AG04450 (cell line): ENCODE measurements at regions of chr12 and their contacts with region 1.

Region 1: GRCh38 chr12:125183187-125184067 is 118.2 kb downstream of the AACS start:
- DNase-seq: peak; percentile 42
- H3K4me3 ChIP-seq: no peak overlapping the region
- H3K27ac ChIP-seq: no peak overlapping the region
- H3K27me3 ChIP-seq: peaks cover 32% of the 10 kb centered on the region
- CTCF ChIP-seq: peak; percentile 99

Region 2: DNA sequence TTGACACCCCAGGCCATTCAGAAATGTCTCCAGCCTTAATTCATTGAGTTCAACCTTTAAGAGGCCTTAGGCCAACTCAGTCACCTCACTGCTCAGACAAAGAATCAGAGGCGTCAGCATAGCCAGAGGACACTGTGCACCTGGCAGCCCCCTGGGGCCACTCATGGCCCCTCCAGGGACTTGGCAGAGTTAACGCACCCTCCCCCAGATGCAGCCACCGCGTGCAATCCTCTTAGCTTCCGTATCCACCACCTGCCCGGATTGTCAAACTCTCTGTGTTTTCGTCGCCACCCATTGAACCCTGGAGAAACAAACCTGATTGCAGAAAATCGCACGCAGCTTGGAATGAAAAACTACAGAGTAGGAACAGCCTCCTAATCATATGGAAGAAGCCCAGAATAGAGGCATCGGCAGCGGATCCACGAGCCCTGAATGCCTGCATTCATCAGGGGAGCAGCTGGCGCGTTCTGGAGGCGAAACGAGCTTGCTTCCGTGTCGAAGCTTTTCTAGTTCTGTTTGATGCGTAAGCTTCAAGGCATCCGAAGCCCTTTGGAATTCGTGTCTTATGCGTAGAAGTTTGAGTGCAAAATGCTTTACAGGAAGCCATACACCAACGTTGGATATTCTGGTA is 167.6 kb before region 1 on chr12:
- CTCF ChIA-PET with region 1: interaction called, 11 read pairs
- POLR2A ChIA-PET with region 1: no interaction called
- DNase-seq: no peak
- H3K4me3 ChIP-seq: no peak overlapping the region
- H3K27ac ChIP-seq: no peak overlapping the region
- H3K27me3 ChIP-seq: no peaks in the 10 kb centered on the region
- CTCF ChIP-seq: no peak

Region 3: GRCh38 chr12:125172231-125172850 is 11.1 kb before region 1 on chr12:
- CTCF ChIA-PET with region 1: interaction called, 13 read pairs
- POLR2A ChIA-PET with region 1: no interaction called
- DNase-seq: no peak
- H3K4me3 ChIP-seq: no peak overlapping the region
- H3K27ac ChIP-seq: no peak overlapping the region
- H3K27me3 ChIP-seq: peaks cover 2% of the 10 kb centered on the region
- CTCF ChIP-seq: no peak

Region 4: GRCh38 chr12:125203145-125203765 is 19.8 kb after region 1 on chr12:
- CTCF ChIA-PET with region 1: interaction called, 11 read pairs
- POLR2A ChIA-PET with region 1: no interaction called
- DNase-seq: no peak
- H3K4me3 ChIP-seq: no peak overlapping the region
- H3K27ac ChIP-seq: no peak overlapping the region
- H3K27me3 ChIP-seq: peaks cover 2% of the 10 kb centered on the region
- CTCF ChIP-seq: peak; percentile 61

Region 5: DNA sequence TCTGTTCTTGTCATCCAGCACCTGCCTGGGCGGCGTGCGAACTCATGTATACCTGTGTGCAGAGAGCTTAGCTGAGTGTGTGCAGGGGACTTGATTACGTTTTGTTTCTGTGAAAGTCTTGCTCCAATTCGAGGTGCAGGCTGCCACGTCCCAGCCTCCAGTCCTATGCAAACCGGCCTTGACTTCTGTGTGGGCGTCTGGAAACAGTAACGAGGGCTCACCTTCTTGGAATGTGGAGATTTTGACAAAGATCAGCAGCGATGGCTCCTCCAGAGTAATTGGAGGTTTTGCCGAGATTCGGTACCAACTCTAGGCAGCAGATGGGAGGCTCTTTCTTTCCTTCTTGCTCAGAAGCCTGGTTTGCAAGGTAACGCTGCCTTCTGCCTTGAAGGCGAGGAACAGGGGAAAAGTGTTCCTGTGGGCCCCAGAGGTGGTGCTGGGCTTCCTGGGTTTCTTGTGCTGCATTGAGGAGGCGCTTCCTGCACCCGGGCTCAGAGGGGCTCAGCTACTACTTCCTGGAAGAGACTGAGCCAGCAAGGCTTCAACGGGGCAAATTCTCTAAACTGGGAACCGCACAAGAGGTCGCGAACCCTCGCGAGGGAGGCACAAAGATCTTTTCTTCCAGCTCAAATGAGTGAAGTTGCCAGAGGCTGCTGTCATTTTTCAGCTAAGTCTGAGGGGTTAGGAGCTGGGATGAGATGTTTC is 130.8 kb after region 1 on chr12:
- CTCF ChIA-PET with region 1: no interaction called
- POLR2A ChIA-PET with region 1: no interaction called
- DNase-seq: no peak
- H3K4me3 ChIP-seq: no peak overlapping the region
- H3K27ac ChIP-seq: no peak overlapping the region
- H3K27me3 ChIP-seq: no peaks in the 10 kb centered on the region
- CTCF ChIP-seq: no peak

Region 6: DNA sequence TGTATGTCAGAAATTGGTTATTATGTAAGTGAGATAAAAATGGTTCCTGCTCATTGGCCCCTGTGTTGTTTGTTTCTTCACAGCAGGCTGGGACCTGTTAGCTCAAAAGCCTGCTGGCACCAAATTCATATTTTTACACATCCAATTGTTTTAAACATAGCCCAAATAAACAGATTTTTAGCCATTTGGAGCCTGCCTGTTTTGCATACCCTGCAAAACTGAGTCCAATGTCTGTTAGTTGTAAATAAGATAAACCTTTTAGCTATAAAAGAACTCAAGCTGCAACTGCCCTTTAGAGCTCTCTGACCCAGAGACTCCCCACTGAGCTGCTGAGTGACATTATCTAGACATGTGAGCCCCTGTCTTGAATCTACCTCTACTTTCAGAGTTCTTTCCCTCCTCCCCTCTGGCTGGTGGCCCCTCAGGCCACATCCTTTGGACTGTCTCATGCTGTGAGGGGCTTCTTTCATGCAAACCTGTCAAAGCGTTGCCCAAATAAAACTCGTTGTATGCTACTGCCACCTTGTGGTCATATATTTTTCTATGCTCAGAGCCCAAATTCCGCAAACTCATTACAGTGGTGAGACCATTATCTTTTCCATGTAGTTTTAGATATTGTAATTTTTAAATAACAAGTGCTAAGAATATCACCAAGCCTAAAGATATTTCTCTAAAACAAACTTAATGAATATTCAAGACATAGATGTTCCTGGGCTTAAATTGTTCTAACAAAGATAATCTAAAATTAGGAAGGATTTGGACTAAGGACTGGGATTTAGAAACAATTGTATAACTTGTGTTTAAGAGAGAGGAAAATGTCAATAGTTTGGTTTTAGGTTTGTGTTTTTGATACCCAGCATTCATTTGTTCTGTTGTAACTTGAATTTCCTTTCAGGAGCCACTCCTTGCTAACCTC is 219.7 kb after region 1 on chr12:
- CTCF ChIA-PET with region 1: interaction called, 11 read pairs
- POLR2A ChIA-PET with region 1: no interaction called
- DNase-seq: no peak
- H3K4me3 ChIP-seq: no peak overlapping the region
- H3K27ac ChIP-seq: no peak overlapping the region
- H3K27me3 ChIP-seq: no peaks in the 10 kb centered on the region
- CTCF ChIP-seq: peak; percentile 45